Activated CD8-positive, alpha-beta memory T cell treated with anti-CD3 and anti-CD28 coated beads, Interleukin-2, amount 10 ng/mL, durations not matched to agents 7 days and 5 days (primary cell): ENCODE measurements at regions of chr15 and their contacts with region 1.

Region 1: DNA sequence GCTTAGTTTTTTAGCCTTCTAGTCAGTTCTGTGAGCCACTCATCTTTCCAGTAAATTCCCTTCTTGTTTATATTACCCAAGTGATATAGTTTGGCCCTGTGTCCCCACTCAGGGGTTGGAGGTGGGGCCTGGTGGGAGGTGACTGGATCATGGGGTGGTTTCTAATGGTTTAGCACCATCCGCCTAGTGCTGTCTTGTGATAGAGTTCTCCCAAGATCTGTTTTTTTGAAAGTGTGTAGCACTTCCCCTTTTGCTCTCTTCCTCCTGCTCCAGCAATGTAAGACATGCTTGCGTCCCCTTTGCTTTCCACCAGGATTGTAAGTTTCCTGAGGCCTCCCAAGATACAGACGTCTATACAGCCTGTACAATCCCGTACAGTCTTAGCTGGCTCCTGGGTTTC is 53.7 kb upstream of the INO80 start:
- DNase-seq: no peak
- ATAC-seq: no peak
- H3K4me3 Mint-ChIP-seq: no peak overlapping the region
- H3K27ac Mint-ChIP-seq: no peak overlapping the region
- H3K4me1 Mint-ChIP-seq: no peaks in the 10 kb centered on the region
- H3K27me3 Mint-ChIP-seq: peaks cover 12% of the 10 kb centered on the region

Region 2: GRCh38 chr15:41139619-41140018 is 30.2 kb before region 1 on chr15:
- CTCF ChIA-PET with region 1: no interaction called
- DNase-seq: no peak
- ATAC-seq: no peak
- H3K4me3 Mint-ChIP-seq: no peak overlapping the region
- H3K27ac Mint-ChIP-seq: no peak overlapping the region
- H3K4me1 Mint-ChIP-seq: peaks cover 2% of the 10 kb centered on the region
- H3K27me3 Mint-ChIP-seq: no peaks in the 10 kb centered on the region

Region 3: GRCh38 chr15:41180206-41180789 is 10.5 kb after region 1 on chr15:
- CTCF ChIA-PET with region 1: interaction called, 12 read pairs
- DNase-seq: no peak
- ATAC-seq: no peak
- H3K4me3 Mint-ChIP-seq: no peak overlapping the region
- H3K27ac Mint-ChIP-seq: no peak overlapping the region
- H3K4me1 Mint-ChIP-seq: peaks cover 1% of the 10 kb centered on the region
- H3K27me3 Mint-ChIP-seq: peaks cover 13% of the 10 kb centered on the region

Region 4: GRCh38 chr15:41283653-41284426 is 114.1 kb after region 1 on chr15:
- CTCF ChIA-PET with region 1: no interaction called
- DNase-seq: peak; percentile 98
- ATAC-seq: peak; percentile 96
- H3K4me3 Mint-ChIP-seq: peak overlapping the region; percentile 94
- H3K27ac Mint-ChIP-seq: peak overlapping the region; percentile 95
- H3K4me1 Mint-ChIP-seq: peaks cover 47% of the 10 kb centered on the region
- H3K27me3 Mint-ChIP-seq: peaks cover 2% of the 10 kb centered on the region